Head of caudate nucleus (tissue), 42 donors: ENCODE measurements at regions of chr17 and their contacts with region 1.

Region 1: DNA sequence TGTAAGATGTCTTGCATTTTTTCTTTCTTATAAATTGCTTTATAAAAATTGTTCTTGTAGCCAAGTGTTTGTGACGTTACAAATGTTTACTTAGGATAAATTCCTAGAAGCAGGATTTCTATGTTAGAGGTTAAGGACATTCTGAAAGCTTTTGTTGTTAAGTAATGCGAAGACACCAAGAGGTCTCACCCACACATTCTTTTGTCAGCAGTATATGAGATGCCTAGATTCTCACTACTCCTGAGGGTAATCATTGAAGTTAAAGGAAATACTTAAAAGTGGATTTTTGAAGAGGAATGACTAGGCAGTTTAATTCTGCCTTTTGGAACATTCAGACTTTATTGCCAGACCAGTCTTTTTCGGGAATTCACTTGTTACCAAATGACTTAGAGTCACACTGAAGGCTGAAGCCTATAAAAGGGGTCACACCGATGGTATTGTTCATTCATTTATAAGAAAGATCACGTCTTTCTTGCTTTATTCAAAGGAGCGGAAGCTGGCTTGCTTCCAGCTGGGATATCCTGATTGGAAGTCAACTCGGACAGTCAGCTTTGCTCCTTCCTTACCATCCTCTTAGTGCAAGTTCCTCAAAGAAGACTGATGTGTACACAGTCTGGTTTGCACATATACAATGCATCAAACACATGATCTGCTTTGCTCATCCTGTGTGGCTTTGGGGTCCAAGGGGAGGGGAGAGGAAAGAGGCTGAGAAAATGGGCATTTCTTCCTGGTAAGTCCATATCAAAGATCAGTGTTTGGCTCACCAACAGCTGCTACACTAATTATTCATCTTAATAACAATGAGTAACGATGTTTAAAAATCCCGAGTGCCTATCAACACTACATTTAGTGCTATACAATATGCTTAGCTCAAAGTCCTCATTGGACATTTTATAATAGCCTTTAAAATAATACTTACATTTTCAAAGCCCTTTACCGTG is 160.0 kb downstream of the MAP2K6 start:
- DNase-seq: no peak

Region 2: GRCh38 chr17:70144260-70144846 is 569.8 kb after region 1 on chr17:
- intact Hi-C with region 1: loop called (anchors 5 kb)
- DNase-seq: peak in 9 of 42 donors; percentile 13 to 63 (median 25)